MCF 10A (cell line): ENCODE measurements at regions of chr20 and their contacts with region 1.

Region 1: GRCh38 chr20:2523919-2524708 is 12.3 kb upstream of the TMC2 start:
- DNase-seq: peak; percentile 72
- H3K4me3 Mint-ChIP-seq: peak overlapping the region; percentile 90
- H3K27ac Mint-ChIP-seq: peak overlapping the region; percentile 87
- H3K4me1 Mint-ChIP-seq: no peaks in the 10 kb centered on the region
- H3K27me3 Mint-ChIP-seq: peaks cover 25% of the 10 kb centered on the region
- CTCF ChIP-seq: peak; percentile 86

Region 2: GRCh38 chr20:2508631-2509467 is 15.3 kb before region 1 on chr20 and contains the start of gene ZNF343:
- CTCF ChIA-PET with region 1: interaction called, 76 read pairs
- POLR2A ChIA-PET with region 1: interaction called, 24 read pairs
- intact Hi-C with region 1: no loop called
- DNase-seq: peak; percentile 82
- H3K4me3 Mint-ChIP-seq: peak within 1 kb of the TSS; percentile 88
- H3K27ac Mint-ChIP-seq: peak within 1 kb of the TSS; percentile 96
- H3K4me1 Mint-ChIP-seq: no peaks in the 10 kb centered on the region
- H3K27me3 Mint-ChIP-seq: no peaks in the 10 kb centered on the region
- CTCF ChIP-seq: no peak
- total RNA-seq, gene ZNF343: 16.6 and 17.5 TPM in 2 replicates

Region 3: DNA sequence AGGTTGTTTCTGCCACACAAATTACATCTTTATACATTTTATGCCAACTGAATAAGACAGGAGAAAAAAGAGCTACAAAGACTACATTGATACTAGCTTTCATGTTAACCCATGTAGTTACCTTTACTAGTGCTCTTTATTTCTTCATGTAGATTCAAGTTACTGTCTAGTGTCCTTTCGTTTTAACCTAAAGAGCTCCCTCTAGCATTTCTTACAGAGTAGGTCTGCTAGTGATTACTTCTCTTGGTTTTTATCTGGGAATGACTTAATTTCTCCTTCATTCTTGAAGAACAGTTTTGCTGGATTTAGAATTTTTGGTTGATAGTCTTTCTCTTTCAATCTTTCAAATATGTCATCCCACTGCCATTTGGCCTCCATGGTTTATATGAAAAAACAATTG is 107.1 kb after region 1 on chr20:
- CTCF ChIA-PET with region 1: interaction called, 3 read pairs
- POLR2A ChIA-PET with region 1: no interaction called
- intact Hi-C with region 1: loop called (anchors 1 kb)
- DNase-seq: peak; percentile 11
- H3K4me3 Mint-ChIP-seq: no peak overlapping the region
- H3K27ac Mint-ChIP-seq: no peak overlapping the region
- H3K4me1 Mint-ChIP-seq: peaks cover 7% of the 10 kb centered on the region
- H3K27me3 Mint-ChIP-seq: peaks cover 23% of the 10 kb centered on the region
- CTCF ChIP-seq: peak; percentile 16

Region 4: DNA sequence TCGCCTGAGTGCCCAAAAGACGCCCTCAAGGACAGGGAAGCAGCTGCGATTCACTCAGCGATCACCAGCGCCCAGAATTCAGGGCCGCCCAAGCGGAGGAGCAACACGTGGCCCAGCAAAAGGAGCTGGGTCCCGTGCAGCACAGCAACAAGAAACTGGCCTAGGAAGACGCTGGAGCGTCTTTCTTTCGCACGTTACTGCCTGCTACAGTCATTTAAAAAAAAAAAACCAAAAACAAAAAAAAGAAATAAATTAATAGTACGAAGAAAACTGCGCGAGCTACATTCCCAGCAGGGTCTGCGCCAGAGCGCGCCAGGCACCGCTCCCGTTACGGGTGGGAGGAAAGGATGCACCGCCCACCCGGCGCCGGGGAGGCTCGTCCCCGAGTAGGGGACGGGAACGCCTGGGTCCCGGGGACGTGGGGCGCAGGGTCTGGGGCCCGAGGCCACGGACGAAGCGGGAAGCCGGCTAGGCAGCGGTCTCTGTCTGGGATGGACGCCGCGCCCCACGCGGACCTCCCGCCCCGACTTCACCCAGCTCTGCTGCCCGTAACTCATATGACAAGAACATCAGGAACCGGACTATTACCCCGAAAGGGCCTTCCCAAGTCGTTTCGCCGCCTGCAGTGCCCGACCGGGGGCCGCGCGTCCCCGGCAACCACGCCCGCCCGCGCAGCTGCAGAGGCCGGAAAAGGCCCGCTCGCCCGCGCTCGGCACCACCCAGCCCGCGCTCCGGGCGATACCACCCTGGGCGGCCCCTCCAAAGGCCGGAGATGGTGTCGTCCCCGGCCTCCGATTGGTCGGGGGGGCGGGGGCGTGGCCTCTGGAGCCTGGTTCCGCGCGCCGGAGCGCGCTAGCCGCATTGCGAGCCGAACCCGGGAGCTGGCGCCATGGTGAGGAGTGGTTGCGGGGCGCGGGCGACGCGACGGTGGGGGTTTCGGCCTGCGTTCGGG is 127.9 kb after region 1 on chr20 and contains the start of gene NOP56:
- CTCF ChIA-PET with region 1: interaction called, 11 read pairs
- POLR2A ChIA-PET with region 1: interaction called, 9 read pairs
- intact Hi-C with region 1: loop called (anchors 2 kb)
- DNase-seq: peak; percentile 89
- H3K4me3 Mint-ChIP-seq: peak within 1 kb of the TSS; percentile 87
- H3K27ac Mint-ChIP-seq: peak within 1 kb of the TSS; percentile 66
- H3K4me1 Mint-ChIP-seq: peaks cover 23% of the 10 kb centered on the region
- H3K27me3 Mint-ChIP-seq: no peaks in the 10 kb centered on the region
- CTCF ChIP-seq: no peak
- total RNA-seq, gene NOP56: 228 and 340 TPM in 2 replicates